ENCODE measurements at regions of chr20 and their contacts with region 1.

Region 1: DNA sequence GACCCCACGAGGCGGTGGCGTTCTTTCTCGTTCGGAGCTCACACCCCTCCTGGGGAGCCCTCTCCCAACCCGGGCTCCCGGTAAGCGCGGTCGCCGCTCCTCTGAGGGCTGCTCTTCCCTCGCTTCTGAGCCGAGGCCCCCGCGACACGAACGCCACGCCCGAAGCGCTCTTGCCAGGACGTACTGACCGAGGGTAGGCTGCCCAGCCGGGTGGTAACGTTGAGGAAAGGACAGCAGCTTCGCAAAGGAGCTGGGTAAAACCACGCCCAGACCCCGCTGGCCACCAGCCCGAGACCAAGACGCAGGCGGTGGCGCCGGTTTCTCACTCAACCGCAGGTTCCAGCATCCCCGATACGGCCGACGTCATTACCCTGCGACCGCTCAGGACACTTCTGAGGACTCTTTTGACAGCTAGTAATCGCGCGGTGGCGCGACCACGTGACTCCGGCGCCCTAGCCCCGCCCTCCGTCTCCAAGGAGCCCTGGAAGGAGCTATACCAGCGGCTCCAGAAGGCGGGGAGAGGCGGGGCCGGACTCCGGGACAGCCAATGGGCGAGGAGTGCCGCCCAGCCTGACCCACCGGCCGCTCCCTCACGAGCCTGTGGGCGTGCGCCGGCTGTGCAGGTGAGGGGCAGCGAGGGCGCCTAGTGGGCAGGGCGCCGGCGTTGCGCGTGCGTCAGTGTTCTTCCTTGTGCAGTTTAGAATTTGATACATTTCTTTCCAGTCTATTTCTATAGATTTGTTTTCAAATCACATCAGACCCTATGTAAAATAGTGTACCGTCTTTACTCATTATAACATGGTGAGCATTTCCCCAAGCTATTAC is 4.0 kb upstream of the GZF1 start:
- DNase-seq: peak; percentile 100
- H3K4me3 Mint-ChIP-seq: peak overlapping the region; percentile 87
- H3K27ac Mint-ChIP-seq: peak overlapping the region; percentile 90
- H3K4me1 Mint-ChIP-seq: peaks cover 29% of the 10 kb centered on the region
- H3K27me3 Mint-ChIP-seq: no peaks in the 10 kb centered on the region

Region 2: DNA sequence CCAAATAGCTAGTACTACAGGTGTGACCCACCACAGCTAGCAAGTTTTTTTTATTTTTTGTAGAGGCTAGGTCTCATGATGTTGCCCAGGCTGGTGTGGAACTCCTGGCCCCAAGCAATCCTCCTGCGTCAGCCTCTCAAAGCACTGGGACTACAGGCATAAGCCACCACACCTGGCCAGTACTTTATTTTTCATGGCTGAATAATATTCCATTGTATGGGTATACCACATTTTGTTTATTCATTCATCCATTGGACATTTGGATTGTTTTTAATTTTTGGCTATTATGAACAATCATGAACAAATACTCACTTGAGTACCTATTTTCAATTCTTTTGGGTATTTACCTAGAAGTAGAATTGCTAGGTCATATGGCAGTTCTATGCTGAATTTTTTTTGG is 14.4 kb before region 1 on chr20:
- CTCF ChIA-PET with region 1: no interaction called
- intact Hi-C with region 1: no loop called
- DNase-seq: no peak
- H3K4me3 Mint-ChIP-seq: no peak overlapping the region
- H3K27ac Mint-ChIP-seq: no peak overlapping the region
- H3K4me1 Mint-ChIP-seq: peaks cover 2% of the 10 kb centered on the region
- H3K27me3 Mint-ChIP-seq: no peaks in the 10 kb centered on the region

Region 3: DNA sequence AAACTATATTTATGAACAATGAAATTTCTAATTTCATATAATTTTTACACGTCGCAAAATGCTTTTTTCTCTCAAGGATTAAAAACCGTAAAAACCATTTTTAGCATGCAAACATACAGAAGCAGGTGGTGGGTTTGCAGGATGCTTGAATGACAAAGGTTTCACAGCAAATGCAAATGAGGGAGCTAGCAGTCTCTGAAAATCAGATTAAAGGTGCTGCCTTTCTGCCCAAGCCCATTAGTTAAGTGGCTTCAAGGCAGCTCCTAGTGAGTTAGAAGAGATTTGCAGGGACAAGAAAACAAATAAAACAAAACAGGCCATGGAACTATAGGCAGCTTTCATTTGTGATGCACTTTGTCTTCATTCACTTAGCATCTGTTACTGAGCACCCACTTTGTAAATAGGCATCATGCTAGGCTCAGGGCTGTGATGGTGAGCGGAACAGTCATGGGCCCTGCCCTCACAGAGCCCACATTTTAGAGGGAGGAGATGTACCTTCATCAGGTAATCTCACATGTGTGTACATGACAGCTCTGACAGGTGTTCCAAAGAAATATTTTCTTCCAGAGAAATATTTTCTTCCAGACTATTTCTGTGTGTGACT is 33.8 kb after region 1 on chr20:
- CTCF ChIA-PET with region 1: no interaction called
- intact Hi-C with region 1: no loop called
- DNase-seq: no peak
- H3K4me3 Mint-ChIP-seq: no peak overlapping the region
- H3K27ac Mint-ChIP-seq: no peak overlapping the region
- H3K4me1 Mint-ChIP-seq: no peaks in the 10 kb centered on the region
- H3K27me3 Mint-ChIP-seq: no peaks in the 10 kb centered on the region

Region 4: GRCh38 chr20:23407781-23408464 is 49.9 kb after region 1 on chr20:
- CTCF ChIA-PET with region 1: no interaction called
- intact Hi-C with region 1: loop called (anchors 2 kb)
- DNase-seq: peak; percentile 32
- H3K4me3 Mint-ChIP-seq: no peak overlapping the region
- H3K27ac Mint-ChIP-seq: no peak overlapping the region
- H3K4me1 Mint-ChIP-seq: peaks cover 26% of the 10 kb centered on the region
- H3K27me3 Mint-ChIP-seq: no peaks in the 10 kb centered on the region

Region 5: GRCh38 chr20:23420943-23421931 is 63.3 kb after region 1 on chr20 and contains the start of gene NAPB:
- CTCF ChIA-PET with region 1: interaction called, 3 read pairs
- intact Hi-C with region 1: loop called (anchors 1 kb)
- DNase-seq: peak; percentile 94
- H3K4me3 Mint-ChIP-seq: peak within 1 kb of the TSS; percentile 81
- H3K27ac Mint-ChIP-seq: no peak within 1 kb of the TSS
- H3K4me1 Mint-ChIP-seq: peaks cover 24% of the 10 kb centered on the region
- H3K27me3 Mint-ChIP-seq: peaks cover 5% of the 10 kb centered on the region
- total RNA-seq, gene NAPB: 5.4 to 7.6 TPM

Region 6: GRCh38 chr20:23492292-23492691 is 134.3 kb after region 1 on chr20:
- CTCF ChIA-PET with region 1: no interaction called
- intact Hi-C with region 1: no loop called
- DNase-seq: peak; percentile 20
- H3K4me3 Mint-ChIP-seq: no peak overlapping the region
- H3K27ac Mint-ChIP-seq: no peak overlapping the region
- H3K4me1 Mint-ChIP-seq: peaks cover 4% of the 10 kb centered on the region
- H3K27me3 Mint-ChIP-seq: peaks cover 5% of the 10 kb centered on the region

Region 7: DNA sequence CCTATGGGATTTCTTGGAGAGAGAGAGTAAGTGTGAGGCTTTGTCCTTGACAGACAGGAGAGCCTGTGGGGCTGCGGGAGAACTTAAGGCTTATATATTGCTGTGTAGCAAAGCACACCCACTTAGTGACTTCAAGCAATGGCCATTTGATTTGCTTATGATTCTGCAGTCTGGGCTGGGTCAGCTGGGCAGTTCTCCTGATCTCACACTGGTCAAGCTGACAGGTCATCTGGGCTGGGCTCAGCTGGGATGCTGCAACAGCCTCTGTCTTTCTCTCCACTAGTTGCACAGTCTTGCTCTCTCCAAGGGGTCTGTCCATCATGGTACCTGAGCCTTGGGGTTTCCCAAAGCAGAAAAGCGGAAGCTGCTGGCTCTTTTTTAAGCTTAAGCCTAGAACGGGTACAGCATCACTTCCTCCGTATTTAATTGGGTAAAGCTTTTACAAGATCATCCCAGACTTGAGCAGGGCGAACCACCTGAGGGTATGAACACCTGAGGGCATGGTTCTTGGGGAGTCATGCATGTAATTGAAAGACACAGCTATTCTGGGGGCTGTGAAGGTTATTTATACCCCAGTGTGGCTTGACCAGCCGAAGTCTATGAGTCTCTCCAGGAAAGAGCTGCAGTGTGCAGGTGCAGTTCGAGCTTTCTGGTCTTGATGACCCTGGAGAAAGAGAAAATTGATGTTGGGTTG is 643.9 kb after region 1 on chr20:
- CTCF ChIA-PET with region 1: no interaction called
- intact Hi-C with region 1: no loop called
- DNase-seq: no peak
- H3K4me3 Mint-ChIP-seq: no peak overlapping the region
- H3K27ac Mint-ChIP-seq: no peak overlapping the region
- H3K4me1 Mint-ChIP-seq: no peaks in the 10 kb centered on the region
- H3K27me3 Mint-ChIP-seq: no peaks in the 10 kb centered on the region

Region 8: GRCh38 chr20:24027229-24027628 is 669.2 kb after region 1 on chr20:
- CTCF ChIA-PET with region 1: no interaction called
- intact Hi-C with region 1: loop called (anchors 5 kb)
- DNase-seq: peak; percentile 90
- H3K4me3 Mint-ChIP-seq: peak overlapping the region; percentile 40
- H3K27ac Mint-ChIP-seq: peak overlapping the region; percentile 84
- H3K4me1 Mint-ChIP-seq: peaks cover 30% of the 10 kb centered on the region
- H3K27me3 Mint-ChIP-seq: no peaks in the 10 kb centered on the region

Region 9: DNA sequence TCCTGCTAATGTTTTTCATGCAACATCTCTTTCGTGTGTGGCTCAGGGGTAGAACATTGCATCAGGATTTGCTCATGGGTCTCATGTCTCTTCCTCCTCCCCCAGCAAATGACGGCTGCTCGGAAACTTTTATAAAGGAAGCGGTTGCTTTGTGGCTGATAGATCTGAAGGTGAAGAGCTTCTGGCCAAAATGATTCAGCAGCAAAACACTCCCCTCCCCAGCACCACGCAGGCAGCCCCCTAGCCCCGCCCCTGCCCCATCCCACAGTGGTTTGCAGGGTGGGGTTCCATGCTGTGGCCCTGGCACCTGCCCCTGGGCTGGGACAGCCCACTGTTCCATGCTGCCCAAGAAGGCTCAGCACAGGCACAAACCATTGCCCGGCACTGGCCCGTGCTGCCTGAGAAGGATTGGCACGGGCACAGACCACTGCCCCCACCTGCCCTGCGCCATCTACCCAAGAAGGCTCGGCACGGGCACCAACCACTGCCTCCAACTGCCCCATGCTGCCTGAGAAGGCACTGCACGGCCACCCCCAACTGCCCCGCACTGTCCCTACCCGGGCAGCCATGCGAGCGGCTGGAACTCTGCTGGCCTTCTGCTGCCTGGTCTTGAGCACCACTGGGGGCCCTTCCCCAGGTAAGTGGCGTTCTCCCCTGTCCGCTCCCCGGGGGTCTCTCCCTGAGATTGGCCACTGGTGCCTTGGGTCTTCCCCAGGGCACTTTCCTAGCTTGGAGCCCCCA is 1591.1 kb after region 1 on chr20 and contains the start of gene CST7:
- CTCF ChIA-PET with region 1: no interaction called
- intact Hi-C with region 1: loop called (anchors 5 kb)
- DNase-seq: peak; percentile 94
- H3K4me3 Mint-ChIP-seq: peak within 1 kb of the TSS; percentile 72
- H3K27ac Mint-ChIP-seq: peak within 1 kb of the TSS; percentile 96
- H3K4me1 Mint-ChIP-seq: peaks cover 40% of the 10 kb centered on the region
- H3K27me3 Mint-ChIP-seq: no peaks in the 10 kb centered on the region
- total RNA-seq, gene CST7: 37.8 to 43.1 TPM

Region 10: DNA sequence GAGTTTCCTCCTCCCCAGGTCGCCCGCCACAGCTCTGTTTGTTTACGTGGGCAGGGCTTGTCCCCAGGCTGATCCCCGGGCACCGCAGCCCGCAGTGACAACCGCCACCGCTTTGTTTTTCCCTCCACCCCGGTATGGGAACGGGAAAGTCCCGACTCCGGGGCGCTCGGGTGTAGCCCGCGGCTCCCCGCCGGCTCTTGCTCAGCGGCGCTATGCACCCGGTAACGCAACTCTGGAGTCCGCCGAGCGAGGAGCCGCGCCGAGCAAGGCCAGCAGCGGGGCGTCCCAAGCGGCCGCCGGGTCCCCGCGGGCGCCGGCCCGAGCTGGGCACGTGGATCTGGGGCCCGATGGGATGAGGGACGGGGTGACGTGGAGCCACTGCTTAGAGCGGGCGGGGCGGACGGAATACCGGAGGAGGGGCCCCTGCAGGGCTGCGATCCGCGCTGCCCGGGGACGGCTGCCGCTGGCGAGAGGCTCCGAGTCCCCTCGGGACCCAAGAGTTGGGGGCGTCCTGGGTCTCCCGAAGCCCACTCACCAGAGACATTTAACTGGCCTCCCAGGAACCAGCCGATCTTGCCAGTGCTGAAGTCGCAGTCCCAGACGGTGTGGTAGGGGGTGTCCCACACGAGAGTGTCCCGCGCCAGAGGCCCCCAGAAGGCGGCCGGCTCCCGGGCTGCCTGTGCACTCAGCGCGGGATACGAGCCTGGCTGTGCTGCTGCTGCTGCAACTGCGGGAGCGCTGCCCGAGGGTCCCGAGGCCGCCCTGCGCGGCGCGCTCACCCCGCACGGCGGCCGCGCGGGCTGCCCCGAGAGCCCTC is 1699.5 kb after region 1 on chr20:
- CTCF ChIA-PET with region 1: no interaction called
- intact Hi-C with region 1: loop called (anchors 10 kb)
- DNase-seq: peak; percentile 88
- H3K4me3 Mint-ChIP-seq: peak overlapping the region; percentile 71
- H3K27ac Mint-ChIP-seq: peak overlapping the region; percentile 72
- H3K4me1 Mint-ChIP-seq: peaks cover 45% of the 10 kb centered on the region
- H3K27me3 Mint-ChIP-seq: no peaks in the 10 kb centered on the region